ENCODE measurements at regions of chr11 and their contacts with region 1.

Region 1: GRCh38 chr11:68038718-68039525 is at the start of gene TCIRG1:
- DNase-seq: peak; percentile 88 to 91 (median 89)
- H3K4me3 ChIP-seq: peak within 1 kb of the TSS; percentile 72
- H3K27ac ChIP-seq: peak within 1 kb of the TSS; percentile 70 to 84
- H3K4me1 ChIP-seq: peaks cover 14% of the 10 kb centered on the region
- H3K27me3 ChIP-seq: no peaks in the 10 kb centered on the region
- CTCF ChIP-seq: peak in 1 of 3 donors; percentile 58
- EP300 ChIP-seq: no peak
- POLR2A ChIP-seq: peak; percentile 90
- total RNA-seq, gene TCIRG1: 55.8 to 109 (median 78.6) TPM

Region 2: GRCh38 chr11:68099474-68100405 is 60.8 kb after region 1 on chr11:
- intact Hi-C with region 1: loop called in 1 of 4 experiments (anchors 10 kb)
- DNase-seq: peak; percentile 62 to 81 (median 69)
- H3K4me3 ChIP-seq: no peak overlapping the region
- H3K27ac ChIP-seq: peak overlapping the region in 1 of 2 donors; percentile 22
- H3K4me1 ChIP-seq: peaks cover 3% of the 10 kb centered on the region
- H3K27me3 ChIP-seq: no peaks in the 10 kb centered on the region
- CTCF ChIP-seq: no peak
- EP300 ChIP-seq: no peak
- POLR2A ChIP-seq: no peak

Region 3: DNA sequence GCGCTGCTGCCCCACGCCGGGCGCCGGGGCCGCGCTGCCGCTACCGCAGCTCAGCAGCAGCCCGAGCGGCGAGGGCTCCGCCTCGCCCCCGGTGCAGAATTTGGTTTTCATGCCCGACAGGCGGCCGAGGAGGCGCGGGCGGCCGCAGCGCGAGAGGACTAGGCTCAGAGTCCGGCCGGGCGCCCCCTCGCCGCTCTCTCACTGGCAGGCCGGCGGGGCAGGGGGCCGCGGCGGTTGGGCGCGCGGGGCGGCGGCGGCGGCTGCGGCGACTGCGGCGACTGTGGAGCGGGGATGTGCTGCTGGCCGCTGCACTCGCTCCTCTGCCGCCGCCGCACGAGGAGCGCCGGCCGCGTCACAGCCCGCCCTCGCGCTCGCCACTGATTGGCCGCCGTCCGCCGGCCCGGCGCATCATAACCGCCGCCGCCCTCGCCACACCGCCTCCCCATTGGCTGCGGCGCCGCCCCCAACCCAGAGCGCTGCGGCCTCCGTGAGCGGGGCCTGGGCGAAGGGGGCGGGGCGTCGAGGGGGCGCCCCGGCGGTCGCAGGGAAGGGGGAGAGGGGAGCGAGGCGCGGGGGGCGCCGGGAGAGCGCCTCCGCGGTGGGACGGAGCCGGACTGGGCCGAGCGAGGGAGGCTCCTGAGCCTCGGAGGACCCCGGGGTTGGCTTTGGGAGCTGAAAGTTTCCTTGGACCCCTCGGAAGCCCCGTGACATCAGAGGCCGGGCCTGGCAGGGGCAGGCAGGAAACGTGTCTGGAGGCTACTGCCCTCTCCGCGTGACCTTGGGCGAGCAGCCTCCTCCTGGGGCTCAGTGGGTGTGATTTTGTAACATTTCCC is 82.4 kb after region 1 on chr11 and contains the start of gene CHKA:
- intact Hi-C with region 1: loop called in 3 of 4 experiments (anchors 5 to 10 kb)
- DNase-seq: peak; percentile 94 to 96 (median 95)
- H3K4me3 ChIP-seq: peak within 1 kb of the TSS; percentile 66
- H3K27ac ChIP-seq: peak within 1 kb of the TSS; percentile 88 to 100
- H3K4me1 ChIP-seq: peaks cover 11% of the 10 kb centered on the region
- H3K27me3 ChIP-seq: no peaks in the 10 kb centered on the region
- CTCF ChIP-seq: peak in 2 of 3 donors; percentile 14 to 35
- EP300 ChIP-seq: peak; percentile 18
- POLR2A ChIP-seq: peak; percentile 85
- total RNA-seq, gene CHKA: 20.7 to 45.3 (median 31.4) TPM

Region 4: DNA sequence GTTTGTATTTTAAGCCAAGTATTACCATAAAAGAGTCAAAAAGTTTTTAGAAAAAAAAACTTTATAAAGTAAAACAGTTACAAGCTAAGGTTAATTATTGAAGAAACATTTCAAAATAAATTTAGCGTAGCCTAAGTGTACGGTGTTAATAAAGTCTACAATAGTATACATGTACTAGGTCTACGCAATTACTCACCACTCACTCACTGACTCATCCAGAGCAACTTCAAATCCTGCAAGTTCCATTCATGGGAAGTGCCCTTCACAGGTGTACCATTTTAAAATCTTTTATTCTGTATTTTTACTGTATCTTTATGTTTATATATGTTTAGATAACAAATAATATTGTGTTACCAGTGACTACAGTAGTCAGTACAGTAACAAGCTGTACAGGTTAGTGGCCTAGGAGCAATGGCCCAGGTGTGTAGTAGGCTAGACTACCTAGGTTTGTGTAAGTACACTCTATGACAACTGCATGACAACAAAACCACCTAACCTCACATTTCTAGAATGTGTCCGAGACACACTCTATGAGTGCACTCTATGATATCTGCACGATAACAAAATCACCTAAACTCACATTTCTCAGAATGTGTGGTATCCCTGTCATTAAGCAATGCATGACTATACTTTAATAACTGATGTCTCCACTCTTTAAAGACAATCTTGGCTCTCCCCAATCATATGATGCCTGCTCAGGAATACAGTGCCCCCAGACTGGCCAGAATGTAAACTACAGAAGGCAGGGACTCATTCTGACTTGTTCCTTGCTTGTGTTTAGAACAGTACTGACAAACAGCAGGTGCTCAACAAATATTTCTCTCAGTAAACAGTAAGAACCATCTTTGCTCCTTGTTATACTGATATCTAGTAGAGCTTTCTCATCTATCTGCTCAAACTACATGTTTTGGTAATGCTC is 153.0 kb after region 1 on chr11:
- intact Hi-C with region 1: no loop called
- DNase-seq: no peak
- H3K4me3 ChIP-seq: no peak overlapping the region
- H3K27ac ChIP-seq: no peak overlapping the region
- H3K4me1 ChIP-seq: peaks cover 13% of the 10 kb centered on the region
- H3K27me3 ChIP-seq: no peaks in the 10 kb centered on the region
- CTCF ChIP-seq: no peak
- EP300 ChIP-seq: no peak
- POLR2A ChIP-seq: no peak

Measured in ovary (tissue), 10 donors.